Vagina (tissue), 2 donors: ENCODE measurements at regions of chr10 and their contacts with region 1.

Region 1: DNA sequence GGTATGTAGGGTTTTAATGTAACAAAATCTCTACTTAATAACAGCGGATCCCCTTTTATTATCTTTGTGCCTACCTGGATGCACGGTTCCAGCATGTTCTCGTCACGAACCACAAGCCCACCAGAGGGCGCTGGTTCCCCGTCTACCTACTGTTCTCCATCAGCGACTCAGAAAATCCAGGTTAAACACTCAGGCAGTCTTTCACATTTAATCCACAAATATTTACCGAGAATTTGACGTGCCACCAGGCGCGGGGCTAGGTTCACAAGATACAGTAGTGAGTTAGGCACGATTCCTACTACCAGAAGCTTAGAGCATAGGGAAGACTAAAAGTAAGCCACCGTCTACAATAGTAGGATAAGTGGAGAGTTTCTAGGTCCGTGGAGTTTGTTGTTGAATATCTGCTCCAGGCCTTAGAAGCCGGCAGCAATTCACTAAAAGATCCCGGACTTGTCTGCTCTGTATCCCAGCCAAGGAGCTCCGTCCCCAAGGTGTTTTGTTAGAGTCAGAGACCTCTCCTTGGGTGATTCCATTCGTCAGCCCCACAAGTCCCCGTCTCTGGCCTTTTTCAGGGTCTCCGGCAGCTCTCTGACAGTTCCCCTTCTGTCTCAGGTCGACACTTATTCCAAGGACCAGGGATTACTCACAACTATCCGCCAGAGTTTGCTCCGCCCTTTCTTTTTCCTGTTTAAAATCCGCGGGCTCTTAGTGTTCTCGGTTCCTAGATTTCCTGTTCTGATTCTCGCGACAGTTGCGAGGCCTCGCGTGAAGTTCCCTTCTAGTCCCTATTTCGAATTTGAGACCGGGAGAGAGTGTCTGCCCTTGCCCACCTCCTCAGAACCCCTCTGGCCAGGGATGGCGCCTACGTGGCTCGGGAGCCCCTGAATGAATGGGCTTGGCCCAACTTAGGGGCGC is 1.5 kb upstream of the KAZALD1 start:
- DNase-seq: no peak
- H3K4me3 ChIP-seq: peak overlapping the region; percentile 68 to 84
- H3K27ac ChIP-seq: peak overlapping the region; percentile 96
- H3K4me1 ChIP-seq: peaks cover 35% of the 10 kb centered on the region
- H3K27me3 ChIP-seq: no peaks in the 10 kb centered on the region
- CTCF ChIP-seq: peak; percentile 60 to 81 (median 69)
- POLR2A ChIP-seq: no peak

Region 2: GRCh38 chr10:100827819-100828737 is 232.2 kb before region 1 on chr10:
- intact Hi-C with region 1: no loop called
- DNase-seq: no peak
- H3K4me3 ChIP-seq: peak overlapping the region; percentile 32 to 50
- H3K27ac ChIP-seq: no peak overlapping the region
- H3K4me1 ChIP-seq: peaks cover 36% of the 10 kb centered on the region
- H3K27me3 ChIP-seq: peaks cover 24% of the 10 kb centered on the region
- CTCF ChIP-seq: no peak
- POLR2A ChIP-seq: no peak

Region 3: GRCh38 chr10:100993986-100994708 is 66.1 kb before region 1 on chr10:
- intact Hi-C with region 1: loop called (anchors 5 kb)
- DNase-seq: no peak
- H3K4me3 ChIP-seq: no peak overlapping the region
- H3K27ac ChIP-seq: no peak overlapping the region
- H3K4me1 ChIP-seq: peaks cover 26% of the 10 kb centered on the region
- H3K27me3 ChIP-seq: no peaks in the 10 kb centered on the region
- CTCF ChIP-seq: peak; percentile 52 to 78 (median 55)
- POLR2A ChIP-seq: no peak

Region 4: DNA sequence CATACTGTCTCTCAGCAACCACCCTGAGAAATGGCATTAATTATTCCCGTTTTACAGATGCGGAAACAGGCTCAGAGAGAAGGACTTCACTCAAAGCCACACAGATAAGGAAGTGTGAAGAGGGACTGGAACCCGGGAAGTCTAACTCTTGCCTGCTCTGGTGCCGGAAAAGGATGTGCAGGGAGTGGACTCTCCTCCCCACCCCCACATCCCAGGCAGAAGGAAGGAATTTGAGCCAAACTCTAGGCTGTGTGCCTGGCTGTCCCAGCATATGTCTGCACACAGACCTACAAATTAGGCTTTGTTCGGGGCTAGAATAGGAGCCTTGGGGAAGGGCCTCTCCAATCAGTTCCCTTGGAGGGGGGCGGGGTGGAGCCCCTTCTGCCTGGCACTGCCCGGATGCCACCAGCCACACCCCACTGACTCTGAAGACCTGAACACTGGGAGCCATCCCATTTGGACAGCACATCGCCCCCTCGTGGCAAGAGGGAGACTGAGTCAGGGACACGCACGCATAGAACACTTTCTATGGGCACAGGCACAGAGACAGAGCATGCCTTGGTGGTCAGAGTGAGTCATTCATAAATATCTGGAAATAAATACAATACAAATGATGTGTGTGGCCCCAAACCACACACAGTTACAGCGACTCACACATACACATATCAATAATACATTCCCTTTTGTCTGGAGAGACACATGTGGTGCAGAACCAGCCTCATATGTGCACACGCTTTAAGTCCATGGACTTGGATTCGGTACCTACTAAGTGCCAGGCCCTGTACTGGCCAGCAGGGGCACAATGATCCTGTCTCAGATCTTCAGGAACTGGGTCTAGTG is 47.5 kb before region 1 on chr10:
- intact Hi-C with region 1: no loop called
- DNase-seq: no peak
- H3K4me3 ChIP-seq: no peak overlapping the region
- H3K27ac ChIP-seq: peak overlapping the region; percentile 38
- H3K4me1 ChIP-seq: peaks cover 18% of the 10 kb centered on the region
- H3K27me3 ChIP-seq: no peaks in the 10 kb centered on the region
- CTCF ChIP-seq: peak; percentile 73 to 94 (median 89)
- POLR2A ChIP-seq: no peak

Region 5: DNA sequence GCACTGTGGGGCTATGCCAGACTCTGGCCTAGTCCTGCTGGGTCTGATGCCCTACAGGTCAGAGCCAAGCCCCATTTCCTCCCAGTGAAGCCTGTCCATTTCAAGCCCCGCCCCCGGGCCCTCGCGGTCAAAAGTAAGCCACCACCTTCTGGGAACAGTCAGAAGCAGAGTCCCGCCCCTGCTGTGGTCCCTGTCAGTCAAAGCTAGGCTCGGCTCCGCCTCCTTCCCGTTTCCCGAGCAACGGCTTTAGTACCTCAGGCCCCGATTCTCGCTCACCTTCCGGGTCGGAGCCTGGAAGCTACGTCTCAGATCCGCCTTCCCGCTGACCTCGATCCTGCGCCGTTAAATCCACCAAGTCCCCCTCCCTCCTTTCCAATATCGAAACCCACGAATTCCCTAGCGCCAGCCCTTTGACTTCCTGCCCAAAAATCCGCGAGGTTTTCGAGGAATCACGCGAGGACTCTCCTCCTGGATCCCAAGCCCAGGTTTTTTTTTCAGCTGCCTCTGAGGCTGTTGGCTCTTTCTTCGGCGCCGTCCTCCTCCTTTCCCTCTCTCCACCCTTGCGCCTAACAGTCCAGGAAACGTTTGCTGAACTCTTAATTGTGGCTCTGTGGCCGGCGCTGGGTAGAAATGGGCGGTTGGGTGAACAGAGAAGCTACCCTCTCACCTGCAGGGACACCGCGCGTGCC is 17.5 kb before region 1 on chr10:
- intact Hi-C with region 1: loop called (anchors 1 kb)
- DNase-seq: peak in 1 of 2 donors; percentile 97
- H3K4me3 ChIP-seq: peak overlapping the region; percentile 45 to 50
- H3K27ac ChIP-seq: peak overlapping the region; percentile 82
- H3K4me1 ChIP-seq: peaks cover 15% of the 10 kb centered on the region
- H3K27me3 ChIP-seq: no peaks in the 10 kb centered on the region
- CTCF ChIP-seq: no peak
- POLR2A ChIP-seq: no peak